ENCODE measurements at regions of chr11 and their contacts with region 1.

Region 1: GRCh38 chr11:67468835-67469811 is at the start of gene TMEM134:
- DNase-seq: peak; percentile 97
- ATAC-seq: peak; percentile 78
- H3K4me3 Mint-ChIP-seq: peak within 1 kb of the TSS; percentile 82
- H3K27ac Mint-ChIP-seq: peak within 1 kb of the TSS; percentile 86
- H3K4me1 Mint-ChIP-seq: peaks cover 23% of the 10 kb centered on the region
- H3K27me3 Mint-ChIP-seq: no peaks in the 10 kb centered on the region
- total RNA-seq, gene TMEM134: 69.9 to 74.7 TPM

Region 2: GRCh38 chr11:67420646-67421420 is 48.3 kb before region 1 on chr11:
- CTCF ChIA-PET with region 1: interaction called, 3 read pairs
- POLR2A ChIA-PET with region 1: no interaction called
- intact Hi-C with region 1: loop called (anchors 1 to 5 kb)
- DNase-seq: peak; percentile 99
- ATAC-seq: peak; percentile 92
- H3K4me3 Mint-ChIP-seq: peak overlapping the region; percentile 76
- H3K27ac Mint-ChIP-seq: peak overlapping the region; percentile 84
- H3K4me1 Mint-ChIP-seq: peaks cover 49% of the 10 kb centered on the region
- H3K27me3 Mint-ChIP-seq: no peaks in the 10 kb centered on the region

Region 3: DNA sequence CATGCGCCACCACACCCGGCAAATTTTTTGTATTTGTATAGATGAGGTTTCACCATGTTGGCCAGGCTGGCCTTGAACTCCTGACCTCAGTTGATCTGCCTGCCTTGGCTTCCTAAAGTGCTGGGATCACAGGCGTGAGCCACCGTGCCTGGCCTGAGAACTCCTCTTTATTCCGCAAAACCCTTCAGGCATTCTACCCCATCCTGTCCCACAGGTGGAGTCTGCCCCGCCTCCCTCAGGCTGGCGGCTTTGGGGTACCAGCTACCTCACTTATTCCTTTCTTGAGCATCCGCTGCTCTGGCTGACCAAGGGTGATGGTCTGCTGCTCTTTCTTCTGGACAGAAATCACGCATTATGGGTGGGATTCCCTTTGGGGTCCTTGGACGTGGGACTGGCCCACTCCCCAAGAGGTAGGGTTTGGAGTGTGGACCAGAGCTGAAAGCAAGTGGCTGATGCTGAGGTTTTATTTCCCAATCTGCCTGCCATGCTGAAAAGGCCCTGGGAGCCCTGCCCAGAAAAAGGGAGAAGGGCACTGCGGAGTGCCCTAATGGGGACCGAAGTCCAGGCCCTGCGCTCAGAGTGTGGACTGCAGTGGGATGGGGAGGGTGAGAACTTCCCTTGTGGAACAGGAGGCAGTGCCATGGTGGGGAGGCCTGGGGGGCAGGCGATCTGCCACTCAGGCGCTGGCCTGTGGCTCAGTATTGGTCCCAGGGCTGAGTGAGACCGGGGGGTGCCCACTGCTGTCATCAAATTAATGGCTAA is 21.1 kb before region 1 on chr11:
- CTCF ChIA-PET with region 1: interaction called, 4 read pairs
- POLR2A ChIA-PET with region 1: no interaction called
- intact Hi-C with region 1: loop called (anchors 1 to 2 kb)
- DNase-seq: no peak
- ATAC-seq: no peak
- H3K4me3 Mint-ChIP-seq: no peak overlapping the region
- H3K27ac Mint-ChIP-seq: peak overlapping the region; percentile 19
- H3K4me1 Mint-ChIP-seq: peaks cover 54% of the 10 kb centered on the region
- H3K27me3 Mint-ChIP-seq: no peaks in the 10 kb centered on the region

Region 4: DNA sequence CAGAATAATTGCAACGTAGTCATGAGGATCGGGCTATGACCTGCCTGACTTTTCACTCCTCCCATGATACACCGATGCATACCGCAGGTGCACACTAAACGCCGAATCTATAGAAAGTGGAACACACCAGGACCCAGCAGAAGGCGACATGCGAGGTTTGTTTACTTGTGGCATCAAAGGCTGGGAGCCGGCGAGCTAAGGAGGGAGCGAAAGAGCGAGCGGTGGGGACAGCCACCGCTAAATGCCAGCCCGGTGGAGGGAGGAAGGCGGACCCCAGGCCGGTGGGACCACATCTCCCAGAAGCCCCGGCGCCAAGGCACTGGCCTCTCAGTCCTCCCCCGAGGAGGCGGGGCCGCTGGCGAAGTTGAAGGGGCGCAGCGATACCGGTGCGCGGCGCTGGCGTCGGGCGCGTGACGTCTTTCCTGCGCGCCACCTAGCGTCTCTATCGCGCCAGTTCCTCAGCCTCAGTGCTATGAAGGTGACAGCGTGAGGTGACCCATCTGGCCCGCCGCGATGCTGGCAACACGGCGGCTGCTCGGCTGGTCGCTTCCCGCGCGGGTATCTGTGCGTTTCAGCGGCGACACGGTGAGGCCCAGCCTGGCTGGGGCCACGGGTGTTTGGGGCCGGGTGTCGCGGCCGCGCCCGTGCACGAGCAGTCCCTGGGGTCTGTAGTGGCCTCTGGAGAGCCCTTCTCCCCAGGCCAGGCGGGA is 137.5 kb after region 1 on chr11 and contains the start of gene NDUFV1:
- CTCF ChIA-PET with region 1: no interaction called
- POLR2A ChIA-PET with region 1: no interaction called
- intact Hi-C with region 1: loop called in 1 of 2 experiments (anchors 1 kb)
- DNase-seq: peak; percentile 98
- ATAC-seq: peak; percentile 100
- H3K4me3 Mint-ChIP-seq: peak within 1 kb of the TSS; percentile 92
- H3K27ac Mint-ChIP-seq: peak within 1 kb of the TSS; percentile 90
- H3K4me1 Mint-ChIP-seq: peaks cover 16% of the 10 kb centered on the region
- H3K27me3 Mint-ChIP-seq: peaks cover 9% of the 10 kb centered on the region
- total RNA-seq, gene NDUFV1: 253 to 287 TPM

Measured in activated CD4-positive, alpha-beta T cell treated with anti-CD3 and anti-CD28 coated beads for 36 hours (primary cell).